ENCODE measurements at regions of chrX and their contacts with region 1.

Region 1: GRCh38 chrX:102863735-102864134 is 73.3 kb upstream of the RAB40AL start:
- H3K4me3 Mint-ChIP-seq: no peak overlapping the region
- H3K27ac Mint-ChIP-seq: no peak overlapping the region
- H3K4me1 Mint-ChIP-seq: no peaks in the 10 kb centered on the region
- H3K27me3 Mint-ChIP-seq: no peaks in the 10 kb centered on the region

Region 2: DNA sequence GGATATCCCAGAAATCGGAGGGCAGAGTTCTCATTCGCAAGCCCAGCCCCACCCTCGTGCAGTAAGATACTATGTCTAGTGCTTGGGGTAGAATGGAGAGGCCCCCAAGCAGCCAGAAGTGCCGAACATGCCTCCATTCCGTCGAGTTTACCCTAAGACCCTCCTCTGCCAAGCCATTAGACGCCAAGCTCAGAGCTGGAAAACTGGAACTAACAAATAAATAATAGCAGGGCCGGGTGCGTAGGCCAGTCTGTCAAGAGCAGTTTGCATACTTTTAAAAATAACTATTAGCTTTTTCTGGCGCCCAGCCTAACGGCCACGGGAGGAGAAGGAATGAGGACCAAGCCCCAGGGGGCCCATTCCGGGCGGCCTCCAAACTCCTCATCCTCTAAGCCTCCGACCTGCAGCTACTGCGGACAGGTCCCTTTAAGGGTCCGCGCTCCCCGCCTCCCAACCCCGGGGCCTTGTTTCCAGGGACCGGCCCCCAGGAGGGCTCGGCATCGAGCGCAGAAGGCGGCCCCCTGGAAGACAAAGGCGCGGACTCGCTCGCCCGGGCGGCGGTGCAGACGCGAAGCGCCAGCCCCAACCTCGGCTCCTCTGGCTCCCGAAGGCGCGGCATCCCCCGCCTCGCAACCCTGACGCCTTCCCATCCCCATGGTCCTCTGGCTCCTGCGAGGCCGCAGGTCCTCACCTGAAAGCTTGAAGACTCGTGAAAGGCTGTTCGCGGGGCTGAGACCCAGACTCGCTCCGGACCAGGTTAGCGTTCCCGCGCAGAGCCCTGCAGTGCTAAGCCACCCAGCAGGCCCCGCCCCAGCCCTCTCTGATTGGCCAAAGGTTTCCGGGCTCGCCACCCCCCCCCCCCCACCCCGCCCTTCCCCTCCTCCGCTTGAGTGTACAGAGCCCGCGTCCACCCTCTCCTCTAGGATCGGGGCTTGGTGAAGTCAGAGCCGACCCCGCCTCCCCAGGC is 347.5 kb before region 1 on chrX and contains the start of gene TMSB15A:
- intact Hi-C with region 1: loop called (anchors 10 kb)
- H3K4me3 Mint-ChIP-seq: peak within 1 kb of the TSS; percentile 75
- H3K27ac Mint-ChIP-seq: no peak within 1 kb of the TSS
- H3K4me1 Mint-ChIP-seq: peaks cover 5% of the 10 kb centered on the region
- H3K27me3 Mint-ChIP-seq: peaks cover 36% of the 10 kb centered on the region